ENCODE measurements at regions of chr14 and their contacts with region 1.

Region 1: DNA sequence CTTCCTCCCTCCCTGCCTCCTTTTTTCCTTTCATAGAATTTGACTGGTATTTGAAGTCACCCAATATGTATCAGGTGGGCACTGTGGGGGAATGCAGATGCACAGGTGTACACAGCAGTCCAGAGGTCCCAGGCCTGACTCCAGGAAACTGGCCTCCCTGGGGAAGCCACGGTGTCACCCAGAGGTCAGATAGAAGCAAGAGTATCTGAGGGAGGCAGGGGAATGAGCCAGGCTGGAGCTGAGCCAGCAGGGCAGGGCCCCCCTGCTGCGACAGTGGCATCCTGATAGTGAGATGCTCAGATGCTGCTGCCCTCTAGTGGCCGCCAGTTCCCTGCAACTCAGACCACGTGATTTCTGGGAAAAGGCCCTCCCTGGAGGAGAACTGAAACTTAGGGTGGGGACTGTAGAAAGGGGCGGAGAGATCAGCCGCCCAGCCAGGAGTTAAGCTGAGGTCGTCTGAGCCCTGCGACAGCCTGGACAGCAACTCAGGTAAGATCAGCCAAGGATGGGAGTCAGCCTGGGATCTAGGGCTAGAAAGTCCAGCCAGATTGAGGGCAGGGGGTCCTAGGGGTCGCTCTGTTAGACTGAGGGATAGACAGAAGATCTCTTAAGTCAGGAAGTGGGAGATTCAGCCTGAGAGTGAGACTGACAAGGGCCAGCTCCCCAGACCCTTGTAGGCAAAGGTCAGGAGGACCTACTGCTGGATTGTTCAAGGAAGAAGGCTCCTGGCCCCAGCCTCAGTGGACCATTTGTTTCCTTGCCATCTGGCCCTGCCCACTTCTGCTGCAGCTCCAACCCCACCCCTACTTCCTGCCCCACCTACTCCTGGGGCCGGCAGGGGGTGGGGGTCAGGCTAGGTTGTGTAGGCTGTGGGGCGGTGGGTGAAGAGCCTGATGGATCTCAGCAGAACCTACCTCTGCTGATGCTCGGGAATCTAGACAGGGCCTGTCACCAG is at the start of gene IRF9:
- DNase-seq: peak; percentile 99
- ATAC-seq: peak; percentile 86
- H3K4me3 Mint-ChIP-seq: peak within 1 kb of the TSS; percentile 92
- H3K27ac Mint-ChIP-seq: peak within 1 kb of the TSS; percentile 100
- H3K4me1 Mint-ChIP-seq: peaks cover 58% of the 10 kb centered on the region
- H3K27me3 Mint-ChIP-seq: no peaks in the 10 kb centered on the region
- total RNA-seq, gene IRF9: 221 to 242 TPM

Region 2: DNA sequence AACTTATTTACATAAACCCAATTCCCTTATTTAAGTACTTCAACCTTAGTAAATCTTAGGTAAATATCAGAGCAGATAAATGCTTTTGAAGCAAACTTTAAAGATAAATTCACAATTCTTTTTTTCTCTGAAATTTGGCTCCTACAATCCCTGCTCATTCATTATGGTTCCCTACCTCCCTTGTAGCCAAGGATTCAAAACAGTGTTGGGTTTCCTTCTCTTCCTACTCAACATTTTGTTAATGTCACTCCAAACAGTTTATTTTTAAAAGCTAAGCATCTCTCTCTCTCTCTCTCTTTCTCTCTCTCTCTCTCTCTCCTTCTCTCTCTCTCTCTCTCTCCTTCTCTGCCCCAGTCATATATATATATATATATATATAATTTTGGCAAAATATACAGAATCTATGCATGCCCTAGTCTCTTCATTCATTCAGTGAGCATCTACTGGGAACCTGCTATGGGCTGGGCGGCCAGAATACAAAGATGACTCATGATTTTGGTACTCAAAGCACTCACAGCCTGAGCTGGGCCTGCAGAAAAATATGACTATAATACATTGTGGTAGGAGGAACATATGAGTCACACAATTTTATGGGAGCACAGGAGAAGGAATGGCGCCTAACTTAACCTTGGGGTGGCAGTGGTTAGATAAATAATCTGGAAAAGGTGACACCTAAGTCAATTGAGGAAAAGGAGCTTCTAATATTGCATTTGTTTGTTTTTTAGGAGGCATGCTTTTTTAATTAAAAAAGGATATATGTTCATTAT is 331.2 kb before region 1 on chr14:
- CTCF ChIA-PET with region 1: no interaction called
- POLR2A ChIA-PET with region 1: no interaction called
- DNase-seq: no peak
- ATAC-seq: no peak
- H3K4me3 Mint-ChIP-seq: no peak overlapping the region
- H3K27ac Mint-ChIP-seq: no peak overlapping the region
- H3K4me1 Mint-ChIP-seq: peaks cover 4% of the 10 kb centered on the region
- H3K27me3 Mint-ChIP-seq: no peaks in the 10 kb centered on the region

Region 3: DNA sequence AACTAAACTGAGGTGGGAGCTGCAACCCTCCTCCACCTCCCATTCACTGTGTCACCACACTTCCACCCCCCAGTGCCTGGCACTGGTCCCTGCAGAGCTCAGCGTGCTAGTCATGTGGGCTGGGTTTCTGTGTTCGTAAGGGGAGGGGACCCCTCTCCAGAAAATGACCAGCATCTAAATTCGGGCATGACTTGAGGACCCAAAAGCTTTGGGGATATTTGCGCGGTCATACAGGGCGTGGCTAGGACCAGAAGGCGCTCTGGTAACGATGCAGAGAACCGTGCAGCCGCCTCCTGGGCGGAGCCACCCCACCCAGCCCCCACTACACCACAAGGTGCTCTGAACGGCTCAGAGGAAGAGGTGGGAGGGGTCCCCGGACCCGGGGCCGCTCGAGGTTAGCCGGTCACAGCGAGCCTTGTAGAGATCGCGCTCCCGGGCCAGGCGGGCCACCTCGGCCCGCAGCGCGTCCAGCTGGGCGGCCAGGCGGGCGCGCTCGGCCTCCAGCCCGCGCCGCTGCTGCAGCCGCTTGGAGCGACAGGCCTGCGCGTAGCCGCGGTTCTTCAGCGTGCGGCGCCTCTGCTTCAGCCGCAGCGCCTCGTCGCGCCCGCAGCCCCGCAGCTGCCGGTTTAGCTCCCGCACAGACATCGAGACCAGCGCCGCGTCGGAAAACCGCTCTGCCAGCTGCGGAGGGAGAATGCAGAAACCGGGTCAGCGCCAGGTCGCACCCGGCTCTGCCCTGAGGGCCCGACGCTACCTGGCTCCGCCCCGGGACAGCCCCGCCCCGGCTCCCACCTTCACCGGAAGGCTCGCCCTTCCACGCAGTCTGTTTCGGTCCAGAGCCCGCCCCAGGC is 80.0 kb before region 1 on chr14:
- CTCF ChIA-PET with region 1: interaction called, 14 read pairs
- POLR2A ChIA-PET with region 1: interaction called, 23 read pairs
- DNase-seq: peak; percentile 89
- ATAC-seq: peak; percentile 94
- H3K4me3 Mint-ChIP-seq: peak overlapping the region; percentile 76
- H3K27ac Mint-ChIP-seq: peak overlapping the region; percentile 86
- H3K4me1 Mint-ChIP-seq: peaks cover 33% of the 10 kb centered on the region
- H3K27me3 Mint-ChIP-seq: no peaks in the 10 kb centered on the region

Region 4: GRCh38 chr14:24114536-24115450 is 46.3 kb before region 1 on chr14 and contains the starts of genes DCAF11 and NRL:
- CTCF ChIA-PET with region 1: interaction called, 66 read pairs
- POLR2A ChIA-PET with region 1: interaction called, 85 read pairs
- DNase-seq: peak; percentile 99
- ATAC-seq: peak; percentile 92
- H3K4me3 Mint-ChIP-seq: peak within 1 kb of the TSS; percentile 96
- H3K27ac Mint-ChIP-seq: peak within 1 kb of the TSS; percentile 99
- H3K4me1 Mint-ChIP-seq: peaks cover 38% of the 10 kb centered on the region
- H3K27me3 Mint-ChIP-seq: no peaks in the 10 kb centered on the region
- total RNA-seq, gene DCAF11: 101 to 107 TPM
- total RNA-seq, gene NRL: 2.8 to 3.4 TPM

Region 5: GRCh38 chr14:24146978-24147760 is 14.0 kb before region 1 on chr14 and contains the start of gene RNF31:
- CTCF ChIA-PET with region 1: interaction called, 77 read pairs
- POLR2A ChIA-PET with region 1: interaction called, 229 read pairs
- DNase-seq: peak; percentile 100
- ATAC-seq: peak; percentile 87
- H3K4me3 Mint-ChIP-seq: peak within 1 kb of the TSS; percentile 88
- H3K27ac Mint-ChIP-seq: peak within 1 kb of the TSS; percentile 95
- H3K4me1 Mint-ChIP-seq: peaks cover 67% of the 10 kb centered on the region
- H3K27me3 Mint-ChIP-seq: no peaks in the 10 kb centered on the region
- total RNA-seq, gene RNF31: 123 to 142 TPM

Region 6: GRCh38 chr14:24188251-24189058 is 27.3 kb after region 1 on chr14 and contains the start of gene IPO4:
- CTCF ChIA-PET with region 1: interaction called, 16 read pairs
- POLR2A ChIA-PET with region 1: interaction called, 85 read pairs
- DNase-seq: peak; percentile 97
- ATAC-seq: peak; percentile 84
- H3K4me3 Mint-ChIP-seq: peak within 1 kb of the TSS; percentile 92
- H3K27ac Mint-ChIP-seq: peak within 1 kb of the TSS; percentile 87
- H3K4me1 Mint-ChIP-seq: peaks cover 49% of the 10 kb centered on the region
- H3K27me3 Mint-ChIP-seq: no peaks in the 10 kb centered on the region
- total RNA-seq, gene IPO4: 56.3 to 60.1 TPM

Region 7: GRCh38 chr14:24241829-24242443 is 80.8 kb after region 1 on chr14:
- CTCF ChIA-PET with region 1: interaction called, 11 read pairs
- POLR2A ChIA-PET with region 1: interaction called, 14 read pairs
- DNase-seq: peak; percentile 95
- ATAC-seq: peak; percentile 85
- H3K4me3 Mint-ChIP-seq: peak overlapping the region; percentile 94
- H3K27ac Mint-ChIP-seq: peak overlapping the region; percentile 100
- H3K4me1 Mint-ChIP-seq: peaks cover 54% of the 10 kb centered on the region
- H3K27me3 Mint-ChIP-seq: no peaks in the 10 kb centered on the region

Region 8: GRCh38 chr14:24504425-24504950 is 343.4 kb after region 1 on chr14:
- CTCF ChIA-PET with region 1: no interaction called
- POLR2A ChIA-PET with region 1: no interaction called
- DNase-seq: no peak
- ATAC-seq: no peak
- H3K4me3 Mint-ChIP-seq: no peak overlapping the region
- H3K27ac Mint-ChIP-seq: no peak overlapping the region
- H3K4me1 Mint-ChIP-seq: peaks cover 46% of the 10 kb centered on the region
- H3K27me3 Mint-ChIP-seq: peaks cover 16% of the 10 kb centered on the region

Measured in activated CD8-positive, alpha-beta T cell treated with anti-CD3 and anti-CD28 coated beads, Interleukin-2, amount 10 ng/mL, durations not matched to agents 7 days and 5 days (primary cell).